ENCODE measurements at regions of chr9 and their contacts with region 1.

Region 1: GRCh38 chr9:121322037-121322775 is 47.8 kb downstream of the STOM start:
- DNase-seq: peak; percentile 87
- H3K4me3 ChIP-seq: no peak overlapping the region
- CTCF ChIP-seq: no peak

Region 2: DNA sequence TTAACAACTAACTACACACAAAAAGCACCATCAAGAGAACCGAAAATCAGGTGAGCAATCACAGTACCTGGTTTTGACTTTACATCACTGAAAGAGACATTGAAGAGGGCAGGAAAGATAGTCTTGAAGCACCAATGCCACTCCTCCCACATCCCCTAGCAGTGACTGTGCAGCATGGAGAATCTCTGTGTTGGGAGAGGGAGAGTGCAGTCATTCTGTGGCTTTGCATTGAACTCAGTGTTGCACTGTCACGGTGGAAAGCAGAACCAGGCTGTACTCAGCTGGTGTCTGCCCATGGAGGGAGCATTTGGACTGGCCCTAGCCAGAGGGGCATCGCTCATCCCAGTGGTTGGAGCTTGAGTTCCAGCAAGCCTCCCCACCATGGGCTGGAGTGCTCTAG is 312.6 kb before region 1 on chr9:
- CTCF ChIA-PET with region 1: no interaction called
- POLR2A ChIA-PET with region 1: no interaction called
- DNase-seq: no peak
- H3K4me3 ChIP-seq: no peak overlapping the region
- CTCF ChIP-seq: no peak

Region 3: GRCh38 chr9:121222524-121223171 is 99.6 kb before region 1 on chr9:
- CTCF ChIA-PET with region 1: interaction called, 33 read pairs
- POLR2A ChIA-PET with region 1: no interaction called
- DNase-seq: no peak
- H3K4me3 ChIP-seq: no peak overlapping the region
- CTCF ChIP-seq: peak; percentile 58

Region 4: GRCh38 chr9:121278535-121279261 is 43.5 kb before region 1 on chr9:
- CTCF ChIA-PET with region 1: interaction called, 22 read pairs
- POLR2A ChIA-PET with region 1: interaction called, 3 read pairs
- DNase-seq: peak; percentile 99
- H3K4me3 ChIP-seq: peak overlapping the region; percentile 38
- CTCF ChIP-seq: peak; percentile 61

Region 5: GRCh38 chr9:121340676-121341392 is 18.6 kb after region 1 on chr9:
- CTCF ChIA-PET with region 1: interaction called, 23 read pairs
- POLR2A ChIA-PET with region 1: no interaction called
- DNase-seq: no peak
- H3K4me3 ChIP-seq: no peak overlapping the region
- CTCF ChIP-seq: no peak

Region 6: GRCh38 chr9:121369595-121370265 is 47.5 kb after region 1 on chr9 and contains the start of gene STOM:
- CTCF ChIA-PET with region 1: interaction called, 297 read pairs
- POLR2A ChIA-PET with region 1: no interaction called
- DNase-seq: no peak
- H3K4me3 ChIP-seq: peak within 1 kb of the TSS; percentile 82
- CTCF ChIP-seq: no peak

Region 7: GRCh38 chr9:121439711-121440664 is 117.8 kb after region 1 on chr9:
- CTCF ChIA-PET with region 1: interaction called, 26 read pairs
- POLR2A ChIA-PET with region 1: no interaction called
- DNase-seq: no peak
- H3K4me3 ChIP-seq: no peak overlapping the region
- CTCF ChIP-seq: no peak